HCT116 (cell line): ENCODE measurements at regions of chr1 and their contacts with region 1.

Region 1: DNA sequence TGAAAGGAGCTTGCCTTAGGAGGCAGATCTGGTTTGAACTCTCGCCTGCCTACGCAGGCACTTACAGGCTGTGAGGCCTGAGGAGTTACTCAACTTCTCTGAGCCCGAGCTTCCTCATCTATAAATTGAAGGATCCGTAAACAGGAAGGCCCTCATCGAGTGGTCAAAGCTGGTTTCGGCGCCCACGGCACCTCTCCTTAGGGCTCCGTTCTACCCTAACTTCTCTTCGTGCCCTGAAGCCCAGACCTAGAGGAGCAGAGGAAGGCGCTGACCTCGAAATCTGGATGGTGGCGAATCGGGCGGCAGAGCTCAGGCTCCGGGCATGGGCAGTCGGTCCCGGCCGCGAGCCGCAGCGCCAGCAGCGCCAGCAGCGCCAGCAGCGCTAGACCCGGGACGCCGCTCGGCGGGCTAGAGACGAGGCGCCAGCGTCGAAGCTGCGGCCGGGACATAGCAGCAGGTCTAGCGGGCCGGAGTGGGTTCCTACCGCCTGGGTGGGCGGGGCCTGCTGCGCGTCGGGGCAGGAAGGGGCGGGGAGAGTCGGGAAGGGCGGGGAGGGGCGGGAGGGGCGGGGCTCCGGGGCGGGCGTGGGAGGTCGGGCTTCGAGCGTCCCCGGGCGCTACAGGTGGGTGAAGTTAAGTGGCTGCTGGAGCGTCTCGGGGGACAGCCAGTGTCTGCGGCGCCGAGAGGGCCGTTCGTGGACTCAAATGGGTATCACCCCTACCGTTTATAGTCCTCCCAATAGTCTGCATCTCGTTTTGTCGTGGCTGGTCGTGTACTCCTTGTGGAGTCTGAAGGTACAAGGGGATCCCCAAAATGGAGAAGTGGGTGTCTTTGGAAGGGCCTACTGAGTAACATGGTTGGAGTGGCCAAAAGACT is at the start of gene CTBS:
- DNase-seq: peak; percentile 53
- ATAC-seq: peak; percentile 93
- H3K4me3 ChIP-seq: peak within 1 kb of the TSS; percentile 66 to 92
- H3K27ac ChIP-seq: peak within 1 kb of the TSS; percentile 98
- H3K4me1 ChIP-seq: peaks cover 14 to 44% of the 10 kb centered on the region in 2 experiments
- H3K27me3 ChIP-seq: no peaks in the 10 kb centered on the region
- CTCF ChIP-seq: no peak
- POLR2A ChIP-seq: peak; percentile 84
- RAD21 ChIP-seq: no peak; the same call in 1 of the 2 replicates
- total RNA-seq, gene CTBS: 19.5 TPM

Region 2: GRCh38 chr1:84506002-84506728 is 68.0 kb before region 1 on chr1 and contains the starts of genes GNG5 and SPATA1:
- CTCF ChIA-PET with region 1: no interaction called
- POLR2A ChIA-PET with region 1: interaction called, 11 read pairs
- RAD21 ChIA-PET with region 1: no interaction called
- intact Hi-C with region 1: loop called (anchors 2 kb)
- DNase-seq: peak; percentile 91
- ATAC-seq: peak; percentile 90
- H3K4me3 ChIP-seq: peak within 1 kb of the TSS; percentile 83 to 85
- H3K27ac ChIP-seq: peak within 1 kb of the TSS; percentile 83
- H3K4me1 ChIP-seq: peaks cover 21 to 38% of the 10 kb centered on the region in 2 experiments
- H3K27me3 ChIP-seq: no peaks in the 10 kb centered on the region
- CTCF ChIP-seq: no peak
- POLR2A ChIP-seq: no peak
- RAD21 ChIP-seq: no peak; the same call in 1 of the 2 replicates
- total RNA-seq, gene GNG5: 193 TPM
- total RNA-seq, gene SPATA1: 3.1 TPM